Caco-2 (cell line): ENCODE measurements at regions of chr7 and their contacts with region 1.

Region 1: DNA sequence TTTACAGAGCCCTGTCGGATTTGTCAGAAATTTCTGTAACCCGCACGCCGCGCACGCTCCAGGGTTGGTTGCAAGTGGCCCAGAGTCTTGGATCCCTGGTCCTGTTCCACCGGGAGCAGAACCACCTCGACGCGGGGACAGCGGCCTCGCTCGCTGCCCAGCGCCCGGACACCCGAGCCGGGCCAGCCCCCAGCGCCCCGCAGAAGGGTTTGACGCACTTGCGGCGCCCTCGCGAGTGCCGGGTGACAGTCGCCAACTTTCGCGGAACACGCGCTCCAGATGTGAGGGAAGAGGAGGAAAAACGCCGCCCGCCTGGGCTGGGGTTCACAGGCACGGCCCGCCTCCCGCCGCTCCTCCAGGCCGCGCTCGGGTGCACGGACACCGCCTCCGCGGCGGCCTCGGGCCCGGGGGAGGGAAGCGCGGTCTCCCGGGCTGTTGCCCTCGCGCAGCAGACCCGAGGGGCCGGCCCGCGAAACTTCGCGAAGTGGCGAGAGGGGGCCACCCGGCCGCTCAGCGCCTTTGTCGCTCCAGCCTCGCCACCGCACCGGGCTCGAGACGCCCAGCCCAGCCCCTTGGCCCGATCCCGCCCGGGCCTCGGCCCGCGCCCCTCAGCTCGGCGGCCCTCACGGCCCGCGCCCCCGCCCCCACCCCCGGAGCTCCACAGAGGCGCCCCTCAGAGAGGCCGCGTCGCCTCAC is 514 bp downstream of the RNF216 start:
- DNase-seq: peak in 1 of 2 experiments; percentile 68
- H3K4me3 ChIP-seq: peak overlapping the region; percentile 81
- H3K4me3 Mint-ChIP-seq: peak overlapping the region; percentile 81
- H3K27ac Mint-ChIP-seq: peak overlapping the region; percentile 83
- H3K4me1 ChIP-seq: no peaks in the 10 kb centered on the region
- H3K4me1 Mint-ChIP-seq: no peaks in the 10 kb centered on the region
- H3K27me3 ChIP-seq: no peaks in the 10 kb centered on the region
- H3K27me3 Mint-ChIP-seq: no peaks in the 10 kb centered on the region
- CTCF ChIP-seq: no peak

Region 2: GRCh38 chr7:5713124-5713912 is 67.6 kb before region 1 on chr7:
- CTCF ChIA-PET with region 1: interaction called, 5 read pairs
- POLR2A ChIA-PET with region 1: no interaction called
- intact Hi-C with region 1: loop called (anchors 5 kb)
- DNase-seq: no peak
- H3K4me3 ChIP-seq: no peak overlapping the region
- H3K4me3 Mint-ChIP-seq: no peak overlapping the region
- H3K27ac Mint-ChIP-seq: peak overlapping the region; percentile 42
- H3K4me1 ChIP-seq: peaks cover 11% of the 10 kb centered on the region
- H3K4me1 Mint-ChIP-seq: peaks cover 6% of the 10 kb centered on the region
- H3K27me3 ChIP-seq: no peaks in the 10 kb centered on the region
- H3K27me3 Mint-ChIP-seq: no peaks in the 10 kb centered on the region
- CTCF ChIP-seq: no peak

Region 3: GRCh38 chr7:5750026-5750653 is 30.8 kb before region 1 on chr7:
- CTCF ChIA-PET with region 1: interaction called, 20 read pairs
- POLR2A ChIA-PET with region 1: interaction called, 31 read pairs
- intact Hi-C with region 1: loop called (anchors 1 kb)
- DNase-seq: peak in 1 of 2 experiments; percentile 62
- H3K4me3 ChIP-seq: no peak overlapping the region
- H3K4me3 Mint-ChIP-seq: no peak overlapping the region
- H3K27ac Mint-ChIP-seq: peak overlapping the region; percentile 64
- H3K4me1 ChIP-seq: peaks cover 35% of the 10 kb centered on the region
- H3K4me1 Mint-ChIP-seq: peaks cover 11% of the 10 kb centered on the region
- H3K27me3 ChIP-seq: no peaks in the 10 kb centered on the region
- H3K27me3 Mint-ChIP-seq: no peaks in the 10 kb centered on the region
- CTCF ChIP-seq: no peak

Region 4: GRCh38 chr7:5767066-5767465 is 13.9 kb before region 1 on chr7:
- CTCF ChIA-PET with region 1: interaction called, 10 read pairs
- POLR2A ChIA-PET with region 1: interaction called, 4 read pairs
- intact Hi-C with region 1: no loop called
- DNase-seq: no peak
- H3K4me3 ChIP-seq: no peak overlapping the region
- H3K4me3 Mint-ChIP-seq: no peak overlapping the region
- H3K27ac Mint-ChIP-seq: peak overlapping the region; percentile 53
- H3K4me1 ChIP-seq: peaks cover 17% of the 10 kb centered on the region
- H3K4me1 Mint-ChIP-seq: peaks cover 26% of the 10 kb centered on the region
- H3K27me3 ChIP-seq: no peaks in the 10 kb centered on the region
- H3K27me3 Mint-ChIP-seq: no peaks in the 10 kb centered on the region
- CTCF ChIP-seq: no peak

Region 5: DNA sequence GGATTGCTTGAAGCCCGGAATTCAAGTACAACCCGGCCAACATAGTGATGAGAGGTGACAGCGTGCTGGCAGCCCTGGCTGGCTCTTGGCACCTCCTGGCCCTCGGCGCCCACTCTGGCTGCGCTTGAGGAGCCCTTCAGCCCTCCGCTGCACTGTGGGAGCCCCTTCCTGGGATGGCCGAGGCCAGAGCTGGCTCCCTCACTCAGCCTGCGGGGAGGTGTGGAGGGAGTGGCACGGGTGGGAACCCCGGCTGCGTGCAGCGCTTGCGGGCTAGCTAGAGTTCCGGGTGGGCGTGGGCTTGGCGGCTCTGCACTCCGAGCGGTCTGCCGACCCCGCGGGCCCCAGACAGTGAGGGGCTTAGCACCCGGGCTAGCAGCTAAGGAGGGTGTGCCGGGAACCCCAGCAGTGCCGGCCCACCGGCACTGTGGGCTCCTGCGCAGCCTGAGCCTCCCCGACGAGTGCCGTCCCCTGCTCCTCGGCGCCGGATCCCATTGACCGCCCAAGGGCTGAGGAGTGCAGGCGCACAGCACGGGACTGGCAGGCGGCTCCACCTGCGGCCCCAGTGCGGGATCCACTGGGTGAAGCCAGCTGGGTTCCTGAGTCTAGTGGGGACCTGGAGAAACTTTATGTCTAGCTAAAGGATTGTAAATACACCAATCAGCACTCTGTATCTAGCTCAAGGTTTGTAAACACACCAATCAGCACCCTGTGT is 12.6 kb after region 1 on chr7:
- CTCF ChIA-PET with region 1: interaction called, 16 read pairs
- POLR2A ChIA-PET with region 1: no interaction called
- intact Hi-C with region 1: no loop called
- DNase-seq: no peak
- H3K4me3 ChIP-seq: no peak overlapping the region
- H3K4me3 Mint-ChIP-seq: no peak overlapping the region
- H3K27ac Mint-ChIP-seq: no peak overlapping the region
- H3K4me1 ChIP-seq: no peaks in the 10 kb centered on the region
- H3K4me1 Mint-ChIP-seq: no peaks in the 10 kb centered on the region
- H3K27me3 ChIP-seq: no peaks in the 10 kb centered on the region
- H3K27me3 Mint-ChIP-seq: no peaks in the 10 kb centered on the region
- CTCF ChIP-seq: no peak

Region 6: GRCh38 chr7:6015917-6016652 is 235.1 kb after region 1 on chr7:
- CTCF ChIA-PET with region 1: no interaction called
- POLR2A ChIA-PET with region 1: interaction called, 13 read pairs
- intact Hi-C with region 1: no loop called
- DNase-seq: peak in 1 of 2 experiments; percentile 49
- H3K4me3 ChIP-seq: no peak overlapping the region
- H3K4me3 Mint-ChIP-seq: no peak overlapping the region
- H3K27ac Mint-ChIP-seq: peak overlapping the region; percentile 89
- H3K4me1 ChIP-seq: peaks cover 29% of the 10 kb centered on the region
- H3K4me1 Mint-ChIP-seq: peaks cover 31% of the 10 kb centered on the region
- H3K27me3 ChIP-seq: no peaks in the 10 kb centered on the region
- H3K27me3 Mint-ChIP-seq: no peaks in the 10 kb centered on the region
- CTCF ChIP-seq: no peak